ENCODE measurements at regions of chr4 and their contacts with region 1.

Region 1: DNA sequence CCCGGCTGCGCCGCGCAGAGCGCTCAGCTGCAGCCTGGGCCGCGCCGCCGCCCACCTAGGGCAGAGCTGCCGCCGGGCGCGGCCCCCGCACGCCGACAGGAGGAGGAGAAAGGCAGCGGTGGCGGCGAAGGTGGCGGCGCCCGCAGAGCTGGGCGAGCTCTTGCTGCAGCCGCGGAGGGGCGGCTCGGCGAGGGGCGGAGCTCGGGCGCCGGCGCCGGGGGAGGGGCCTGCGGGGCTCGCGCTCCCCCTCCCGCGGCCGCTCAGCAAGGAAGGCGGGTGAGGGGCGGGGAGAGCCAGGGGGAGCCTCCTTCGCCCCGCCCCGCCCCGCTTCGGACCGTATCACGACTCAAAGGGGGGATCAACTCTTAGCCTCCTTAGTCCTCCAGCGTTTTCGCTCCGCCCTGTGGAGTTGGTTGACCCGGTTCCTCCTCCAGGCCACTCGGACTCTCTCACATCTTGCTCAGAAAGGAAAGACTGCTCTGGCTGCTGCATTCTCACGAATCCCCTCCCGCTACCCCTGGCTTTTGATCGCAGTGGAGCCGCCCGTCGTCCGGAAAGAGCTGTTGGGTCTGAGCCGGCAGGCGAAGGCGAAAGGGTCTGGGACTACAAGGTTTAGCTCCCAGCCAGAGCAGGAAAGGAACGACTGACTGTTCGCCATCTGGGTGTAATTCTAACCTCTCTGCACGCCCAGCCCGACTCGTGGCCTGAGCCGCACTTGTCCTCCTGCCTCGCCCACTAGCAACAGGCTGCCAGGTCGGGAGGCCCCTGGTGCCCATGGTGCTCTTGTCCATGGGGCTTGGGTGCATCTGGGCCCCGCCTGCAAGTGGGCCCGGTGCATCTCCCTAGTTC is at the start of gene ATP8A1:
- DNase-seq: peak; percentile 91 to 94 (median 93)
- H3K4me3 ChIP-seq: peak within 1 kb of the TSS; percentile 95
- H3K4me3 Mint-ChIP-seq: peak within 1 kb of the TSS; percentile 96 to 99 (median 97)
- H3K27ac ChIP-seq: peak within 1 kb of the TSS; percentile 67
- H3K27ac Mint-ChIP-seq: peak within 1 kb of the TSS; percentile 93 to 99 (median 97)
- H3K4me1 ChIP-seq: peaks cover 31% of the 10 kb centered on the region
- H3K4me1 Mint-ChIP-seq: peaks cover 48 to 50% (median 50%) of the 10 kb centered on the region in 3 donors
- H3K27me3 ChIP-seq: no peaks in the 10 kb centered on the region
- H3K27me3 Mint-ChIP-seq: peaks cover 0 to 1% of the 10 kb centered on the region in 2 donors
- total RNA-seq, gene ATP8A1: 23.3 to 24.4 TPM

Region 2: GRCh38 chr4:42643685-42644084 is 13.5 kb before region 1 on chr4:
- CTCF ChIA-PET with region 1: interaction called, 29 read pairs
- POLR2A ChIA-PET with region 1: interaction called, 13 read pairs
- DNase-seq: no peak
- H3K4me3 ChIP-seq: no peak overlapping the region
- H3K4me3 Mint-ChIP-seq: peak overlapping the region in 5 of 7 donors; percentile 41 to 85 (median 63)
- H3K27ac ChIP-seq: no peak overlapping the region
- H3K27ac Mint-ChIP-seq: peak overlapping the region in 7 of 8 donors; percentile 9 to 93 (median 57)
- H3K4me1 ChIP-seq: peaks cover 73% of the 10 kb centered on the region
- H3K4me1 Mint-ChIP-seq: peaks cover 88 to 99% (median 95%) of the 10 kb centered on the region in 3 donors
- H3K27me3 ChIP-seq: no peaks in the 10 kb centered on the region
- H3K27me3 Mint-ChIP-seq: no peaks in the 10 kb centered on the region

Region 3: GRCh38 chr4:42673082-42673425 is 15.9 kb after region 1 on chr4:
- CTCF ChIA-PET with region 1: interaction called, 22 read pairs
- POLR2A ChIA-PET with region 1: interaction called, 29 read pairs
- DNase-seq: peak in 1 of 5 donors; percentile 26
- H3K4me3 ChIP-seq: no peak overlapping the region
- H3K4me3 Mint-ChIP-seq: peak overlapping the region in 6 of 7 donors; percentile 45 to 88 (median 74)
- H3K27ac ChIP-seq: no peak overlapping the region
- H3K27ac Mint-ChIP-seq: peak overlapping the region; percentile 71 to 99 (median 92)
- H3K4me1 ChIP-seq: peaks cover 37% of the 10 kb centered on the region
- H3K4me1 Mint-ChIP-seq: peaks cover 36 to 58% (median 37%) of the 10 kb centered on the region in 3 donors
- H3K27me3 ChIP-seq: no peaks in the 10 kb centered on the region
- H3K27me3 Mint-ChIP-seq: peaks cover 0 to 1% of the 10 kb centered on the region in 2 donors

Region 4: GRCh38 chr4:42855779-42856178 is 198.6 kb after region 1 on chr4:
- CTCF ChIA-PET with region 1: no interaction called
- POLR2A ChIA-PET with region 1: no interaction called
- DNase-seq: no peak
- H3K4me3 ChIP-seq: no peak overlapping the region
- H3K4me3 Mint-ChIP-seq: no peak overlapping the region
- H3K27ac ChIP-seq: no peak overlapping the region
- H3K27ac Mint-ChIP-seq: no peak overlapping the region
- H3K4me1 ChIP-seq: no peaks in the 10 kb centered on the region
- H3K4me1 Mint-ChIP-seq: no peaks in the 10 kb centered on the region
- H3K27me3 ChIP-seq: no peaks in the 10 kb centered on the region
- H3K27me3 Mint-ChIP-seq: peaks cover 4 to 35% of the 10 kb centered on the region in 2 donors